ENCODE measurements at regions of chr19 and their contacts with region 1.

Region 1: GRCh38 chr19:5961969-5962945 is 15.7 kb downstream of the RANBP3 start:
- H3K4me3 Mint-ChIP-seq: peak overlapping the region; percentile 79
- H3K27ac Mint-ChIP-seq: peak overlapping the region; percentile 95
- H3K4me1 Mint-ChIP-seq: peaks cover 89% of the 10 kb centered on the region
- H3K27me3 Mint-ChIP-seq: no peaks in the 10 kb centered on the region

Region 2: DNA sequence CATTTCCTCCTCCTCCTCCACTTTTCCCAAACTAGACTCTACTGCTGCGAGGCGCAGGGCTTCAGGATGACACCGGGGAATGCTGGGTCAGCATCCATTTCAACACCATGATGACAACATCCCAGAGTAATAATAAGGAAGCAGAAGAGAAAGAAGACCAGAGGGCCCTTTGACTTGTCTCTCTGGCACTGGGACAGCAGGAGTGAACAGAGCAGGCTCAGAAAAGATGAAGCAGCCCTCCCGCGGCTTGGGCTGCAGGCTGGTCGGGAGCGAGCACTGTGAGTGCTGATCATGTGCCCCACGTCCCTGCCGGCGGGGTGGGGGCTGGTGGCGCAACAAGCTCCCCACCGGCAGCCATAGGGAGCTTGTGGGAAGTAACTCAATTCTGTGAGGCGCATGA is 14.8 kb before region 1 on chr19:
- intact Hi-C with region 1: loop called (anchors 2 kb)
- H3K4me3 Mint-ChIP-seq: peak overlapping the region; percentile 69
- H3K27ac Mint-ChIP-seq: peak overlapping the region; percentile 91
- H3K4me1 Mint-ChIP-seq: peaks cover 67% of the 10 kb centered on the region
- H3K27me3 Mint-ChIP-seq: no peaks in the 10 kb centered on the region